GM12878 (cell line): ENCODE measurements at regions of chr13 and their contacts with region 1.

Region 1: DNA sequence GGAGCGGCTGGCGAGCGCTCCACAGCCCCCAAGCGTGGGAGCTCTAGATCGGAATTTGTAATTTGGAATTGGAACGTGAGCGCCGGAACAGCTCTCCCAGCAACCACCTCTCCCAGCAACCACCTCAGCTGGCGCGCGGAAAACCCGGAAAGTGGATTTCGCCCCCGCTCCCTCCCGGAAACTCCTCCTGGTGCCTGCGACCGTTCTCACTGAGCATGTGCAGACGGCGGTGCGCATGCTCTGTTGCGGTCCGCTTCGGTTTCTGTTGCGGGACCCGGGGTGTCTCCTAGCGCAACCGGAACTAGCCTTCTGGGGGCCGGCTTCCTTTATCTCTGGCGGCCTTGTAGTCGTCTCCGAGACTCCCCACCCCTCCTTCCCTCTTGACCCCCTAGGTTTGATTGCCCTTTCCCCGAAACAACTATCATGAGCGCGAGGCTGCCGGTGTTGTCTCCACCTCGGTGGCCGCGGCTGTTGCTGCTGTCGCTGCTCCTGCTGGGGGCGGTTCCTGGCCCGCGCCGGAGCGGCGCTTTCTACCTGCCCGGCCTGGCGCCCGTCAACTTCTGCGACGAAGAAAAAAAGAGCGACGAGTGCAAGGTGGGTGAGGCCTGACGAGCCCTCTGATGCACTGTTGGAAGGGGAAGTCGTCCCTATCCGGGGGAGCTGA is at the start of gene TM9SF2:
- DNase-seq: peak; percentile 90
- ATAC-seq: peak; percentile 72
- H3K4me3 ChIP-seq: peak within 1 kb of the TSS; percentile 93
- H3K27ac ChIP-seq: peak within 1 kb of the TSS; percentile 91
- H3K4me1 ChIP-seq: peaks cover 12% of the 10 kb centered on the region
- H3K27me3 ChIP-seq: no peaks in the 10 kb centered on the region
- CTCF ChIP-seq: no peak
- EP300 ChIP-seq: no peak
- POLR2A ChIP-seq: peak; percentile 77
- RAD21 ChIP-seq: no peak
- polyA plus RNA-seq, gene TM9SF2: 34.6 to 42.5 TPM

Region 2: GRCh38 chr13:99307648-99308339 is 193.5 kb before region 1 on chr13:
- CTCF ChIA-PET with region 1: no interaction called
- POLR2A ChIA-PET with region 1: no interaction called
- RAD21 ChIA-PET with region 1: interaction called, 3 read pairs
- SMC1A ChIA-PET with region 1: no interaction called
- in situ Hi-C with region 1: no loop called
- intact Hi-C with region 1: loop called (anchors 10 kb)
- DNase-seq: no peak
- ATAC-seq: peak; percentile 50
- H3K4me3 ChIP-seq: peak overlapping the region; percentile 98
- H3K27ac ChIP-seq: peak overlapping the region; percentile 93
- H3K4me1 ChIP-seq: peaks cover 49% of the 10 kb centered on the region
- H3K27me3 ChIP-seq: no peaks in the 10 kb centered on the region
- CTCF ChIP-seq: no peak
- EP300 ChIP-seq: no peak
- POLR2A ChIP-seq: no peak; the same call in 1 of the 2 replicates
- RAD21 ChIP-seq: no peak

Region 3: DNA sequence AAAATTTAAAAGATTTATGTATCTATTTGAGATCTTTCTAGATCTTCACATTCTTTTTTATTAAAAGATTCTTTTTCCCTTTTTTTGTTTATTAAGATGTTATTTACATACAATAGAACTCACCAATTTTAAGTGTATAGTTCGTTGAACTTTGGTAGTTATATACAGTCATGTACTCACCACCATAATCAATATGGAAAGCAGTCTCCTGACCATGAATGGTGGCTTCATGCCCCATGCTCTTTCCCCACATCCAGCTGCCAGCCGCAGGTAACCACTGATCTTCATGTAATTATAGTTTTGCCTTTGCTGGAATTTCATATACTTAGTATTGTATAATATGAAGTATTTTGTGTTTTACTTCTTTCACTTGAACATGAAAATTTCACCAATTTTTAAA is 173.6 kb before region 1 on chr13:
- CTCF ChIA-PET with region 1: no interaction called
- POLR2A ChIA-PET with region 1: no interaction called
- RAD21 ChIA-PET with region 1: no interaction called
- SMC1A ChIA-PET with region 1: no interaction called
- in situ Hi-C with region 1: no loop called
- intact Hi-C with region 1: no loop called
- DNase-seq: no peak
- ATAC-seq: no peak
- H3K4me3 ChIP-seq: no peak overlapping the region
- H3K27ac ChIP-seq: no peak overlapping the region
- H3K4me1 ChIP-seq: peaks cover 53% of the 10 kb centered on the region
- H3K27me3 ChIP-seq: no peaks in the 10 kb centered on the region
- CTCF ChIP-seq: no peak
- EP300 ChIP-seq: no peak
- POLR2A ChIP-seq: no peak
- RAD21 ChIP-seq: no peak

Region 4: DNA sequence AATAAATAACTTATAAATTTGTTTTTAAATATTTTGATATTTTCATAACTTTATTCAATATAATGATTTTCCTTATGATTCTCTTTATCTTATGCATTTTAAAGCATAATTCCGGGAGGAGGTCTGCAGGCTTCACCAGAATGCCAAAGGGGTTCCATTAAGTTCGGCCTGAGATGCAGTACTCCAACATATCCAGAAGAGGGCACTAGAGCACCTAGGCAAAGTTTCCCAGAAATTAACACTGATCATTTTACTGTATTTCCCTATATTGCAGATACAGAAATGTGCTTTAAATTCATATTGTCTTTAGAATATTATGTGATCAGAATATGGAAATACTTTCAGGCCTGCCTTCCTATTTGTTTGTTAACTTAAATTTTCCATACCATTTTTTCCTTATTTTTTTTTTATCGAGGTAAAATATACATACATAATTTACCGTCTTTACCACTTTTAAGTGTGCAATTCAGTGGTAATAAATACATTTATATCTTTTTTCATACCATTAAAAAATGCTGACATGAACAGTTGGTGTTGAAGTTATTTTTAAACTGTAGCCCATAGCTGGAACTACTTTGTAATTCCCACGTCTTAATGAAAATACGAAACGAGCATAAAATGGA is 58.9 kb before region 1 on chr13:
- CTCF ChIA-PET with region 1: interaction called, 97 read pairs
- POLR2A ChIA-PET with region 1: interaction called, 3 read pairs
- RAD21 ChIA-PET with region 1: interaction called, 30 read pairs
- SMC1A ChIA-PET with region 1: interaction called, 32 read pairs
- in situ Hi-C with region 1: no loop called
- intact Hi-C with region 1: loop called (anchors 2 kb)
- DNase-seq: no peak
- ATAC-seq: peak; percentile 77
- H3K4me3 ChIP-seq: no peak overlapping the region
- H3K27ac ChIP-seq: no peak overlapping the region
- H3K4me1 ChIP-seq: 0 out of 2 replicates have a peak, but pooled peaks cover 2% of the 10 kb centered on the region
- H3K27me3 ChIP-seq: peaks cover 2 to 4% of the 10 kb centered on the region in 2 experiments; a peak in 2 of 4 replicates
- CTCF ChIP-seq: peak; percentile 81 to 93 (median 88)
- EP300 ChIP-seq: no peak
- POLR2A ChIP-seq: no peak
- RAD21 ChIP-seq: peak; percentile 96

Region 5: DNA sequence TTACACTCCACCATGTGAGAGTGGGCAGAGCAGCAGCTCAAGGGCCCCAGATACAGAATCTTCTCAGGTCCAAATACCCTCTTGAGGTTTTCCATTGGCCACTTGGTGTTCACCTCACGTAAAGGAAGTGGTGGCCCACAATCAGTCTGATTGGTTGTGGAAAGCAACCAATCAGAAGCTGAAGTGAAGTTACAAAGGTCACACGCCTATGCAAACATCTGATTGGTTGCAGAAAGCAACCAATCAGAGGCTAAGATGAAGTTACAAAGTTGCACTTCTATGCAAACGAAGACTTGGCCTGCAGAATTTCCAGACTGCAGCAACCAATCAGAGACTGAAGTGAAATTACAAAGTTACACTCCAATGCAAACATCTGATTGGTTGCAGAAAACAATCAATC is 14.3 kb before region 1 on chr13:
- CTCF ChIA-PET with region 1: interaction called, 8 read pairs
- POLR2A ChIA-PET with region 1: interaction called, 11 read pairs
- RAD21 ChIA-PET with region 1: no interaction called
- SMC1A ChIA-PET with region 1: interaction called, 4 read pairs
- in situ Hi-C with region 1: no loop called
- intact Hi-C with region 1: no loop called
- DNase-seq: no peak
- ATAC-seq: no peak
- H3K4me3 ChIP-seq: no peak overlapping the region
- H3K27ac ChIP-seq: no peak overlapping the region
- H3K4me1 ChIP-seq: no peaks in the 10 kb centered on the region
- H3K27me3 ChIP-seq: no peaks in the 10 kb centered on the region; a peak in 1 of 4 replicates
- CTCF ChIP-seq: no peak
- EP300 ChIP-seq: no peak
- POLR2A ChIP-seq: no peak
- RAD21 ChIP-seq: no peak

Region 6: DNA sequence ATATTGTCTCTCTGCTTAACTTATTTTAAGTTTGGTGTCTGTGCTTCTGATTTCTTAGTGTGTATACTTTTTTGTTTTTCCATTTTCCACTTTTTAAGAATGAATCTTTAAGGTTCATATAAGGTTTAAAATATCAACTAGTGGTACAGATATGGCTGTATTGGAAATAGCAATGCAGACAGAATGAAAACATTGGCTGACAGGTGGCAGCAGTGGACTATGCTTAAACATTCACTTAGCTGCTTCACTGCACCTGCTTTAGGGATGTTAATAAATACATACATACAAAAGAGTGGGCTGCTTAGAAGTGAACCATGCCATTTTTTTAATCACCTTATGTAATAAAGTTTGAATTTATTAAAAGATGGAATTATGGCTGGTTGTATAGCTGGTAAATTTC is 27.2 kb after region 1 on chr13:
- CTCF ChIA-PET with region 1: interaction called, 10 read pairs
- POLR2A ChIA-PET with region 1: no interaction called
- RAD21 ChIA-PET with region 1: interaction called, 4 read pairs
- SMC1A ChIA-PET with region 1: interaction called, 16 read pairs
- in situ Hi-C with region 1: no loop called
- intact Hi-C with region 1: no loop called
- DNase-seq: no peak
- ATAC-seq: peak; percentile 77
- H3K4me3 ChIP-seq: no peak overlapping the region
- H3K27ac ChIP-seq: no peak overlapping the region
- H3K4me1 ChIP-seq: no peaks in the 10 kb centered on the region
- H3K27me3 ChIP-seq: no peaks in the 10 kb centered on the region
- CTCF ChIP-seq: peak; percentile 28 to 64 (median 64); a peak in 5 of 6 replicates
- EP300 ChIP-seq: no peak
- POLR2A ChIP-seq: no peak
- RAD21 ChIP-seq: peak; percentile 63

Region 7: DNA sequence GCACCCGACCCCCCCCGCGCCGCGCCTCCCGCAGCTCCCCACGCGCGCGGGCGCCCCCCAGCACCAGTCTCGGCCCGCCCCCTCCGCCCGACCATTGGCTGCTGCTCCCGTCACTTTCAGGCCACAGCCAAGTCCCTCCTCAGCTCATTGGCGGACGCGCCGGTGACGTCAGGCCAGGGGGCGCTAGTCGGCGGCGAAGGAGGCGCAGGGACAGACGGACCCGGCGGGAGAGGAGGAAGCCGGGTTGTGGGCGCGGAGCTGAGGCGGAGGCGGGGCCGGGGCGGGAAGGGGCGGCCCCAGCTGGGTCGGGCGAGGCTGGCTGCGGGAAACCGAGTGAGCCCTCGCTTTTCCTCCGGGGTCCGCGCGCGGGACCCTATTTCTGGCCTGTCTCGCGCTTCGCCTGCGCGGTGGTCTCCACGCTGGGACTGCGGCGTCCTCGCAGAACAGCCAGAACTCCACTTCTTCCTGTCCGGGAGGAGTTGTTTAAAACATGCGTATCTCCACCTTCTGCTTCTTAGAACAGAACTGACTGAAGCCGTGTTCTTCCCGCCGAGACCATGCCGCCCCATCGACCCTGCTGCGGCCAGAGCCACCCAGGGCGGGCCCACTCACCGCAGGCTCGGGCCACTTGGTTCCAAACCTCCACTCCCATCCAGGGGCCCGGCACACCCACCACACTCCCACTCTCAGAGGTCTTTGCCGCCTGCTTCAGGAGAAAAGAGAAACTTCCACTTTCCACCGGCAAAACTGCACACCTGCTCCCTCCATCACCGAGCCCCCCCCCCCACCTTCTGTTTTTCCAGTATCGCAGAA is 1173.7 kb after region 1 on chr13:
- CTCF ChIA-PET with region 1: no interaction called
- POLR2A ChIA-PET with region 1: no interaction called
- RAD21 ChIA-PET with region 1: no interaction called
- SMC1A ChIA-PET with region 1: no interaction called
- in situ Hi-C with region 1: no loop called
- intact Hi-C with region 1: loop called (anchors 5 kb)
- DNase-seq: peak; percentile 82
- ATAC-seq: peak; percentile 93
- H3K4me3 ChIP-seq: peak overlapping the region; percentile 81
- H3K27ac ChIP-seq: peak overlapping the region; percentile 74
- H3K4me1 ChIP-seq: peaks cover 5% of the 10 kb centered on the region
- H3K27me3 ChIP-seq: no peaks in the 10 kb centered on the region
- CTCF ChIP-seq: peak; percentile 10 to 48 (median 40); a peak in 3 of 6 replicates
- EP300 ChIP-seq: no peak
- POLR2A ChIP-seq: peak; percentile 75
- RAD21 ChIP-seq: no peak